Prostate gland (tissue), 2 donors: ENCODE measurements at regions of chr10 and their contacts with region 1.

Region 1: DNA sequence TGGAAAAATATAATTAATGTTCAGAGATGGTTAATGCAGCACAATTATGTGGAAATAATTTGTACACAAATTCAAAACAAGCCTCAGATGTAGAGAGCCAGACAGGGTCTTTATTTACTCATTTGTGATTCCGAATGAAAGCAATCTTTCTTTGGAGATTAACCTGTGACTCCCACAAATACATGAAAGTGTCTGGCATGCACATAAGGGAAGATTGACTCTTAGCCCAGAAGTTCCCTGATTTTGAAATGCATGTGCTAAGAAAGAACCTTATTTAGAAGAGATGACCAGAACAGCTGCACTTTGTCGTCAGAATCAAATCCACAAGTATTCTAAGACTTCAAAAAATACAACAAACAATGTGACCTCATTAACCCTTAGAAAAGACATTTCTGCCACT is 45.1 kb downstream of the RNLS start:
- DNase-seq: no peak
- H3K4me3 ChIP-seq: no peak overlapping the region
- H3K27ac ChIP-seq: no peak overlapping the region
- H3K4me1 ChIP-seq: no peaks in the 10 kb centered on the region
- H3K27me3 ChIP-seq: no peaks in the 10 kb centered on the region
- CTCF ChIP-seq: no peak
- POLR2A ChIP-seq: no peak

Region 2: DNA sequence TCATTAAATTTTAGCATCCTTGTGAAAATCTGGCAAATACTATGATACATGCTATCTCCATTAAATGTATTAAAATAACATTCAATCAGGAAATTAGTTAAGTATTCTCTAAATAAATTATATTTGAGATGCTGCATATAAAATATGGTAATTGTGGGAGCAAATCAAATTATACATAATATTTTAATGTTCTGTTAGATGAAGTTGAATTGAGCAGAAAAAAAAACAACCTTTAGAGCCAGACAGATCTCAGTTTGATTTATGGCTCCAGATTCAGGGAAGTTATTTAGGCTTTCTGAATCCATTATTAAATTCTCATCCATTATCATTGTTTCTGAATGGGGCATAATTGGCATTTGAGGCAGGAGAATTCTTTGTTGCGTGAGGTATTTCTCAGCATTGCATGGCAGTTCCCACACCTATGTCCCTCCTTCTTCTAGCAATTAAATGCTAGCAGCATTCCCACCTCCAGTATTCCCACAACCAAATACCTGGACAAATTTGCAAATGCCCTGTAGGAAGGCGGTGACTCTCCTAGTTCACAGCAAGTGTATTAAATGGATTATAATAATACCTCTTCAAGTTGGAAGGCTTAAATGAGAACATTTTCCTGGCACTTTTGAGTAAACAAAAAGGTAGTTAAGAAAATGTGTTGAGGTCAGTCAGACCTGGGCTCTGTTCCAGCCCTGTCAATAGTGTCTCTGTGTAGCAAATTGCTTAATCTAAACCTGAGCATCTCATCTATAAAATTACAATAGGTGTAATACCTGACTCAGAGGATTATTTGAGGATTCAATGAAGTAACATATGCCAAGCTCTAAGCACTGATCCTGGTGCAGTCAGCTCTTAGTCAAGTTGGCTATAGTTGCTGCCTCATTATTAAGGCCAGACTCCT is 63.8 kb before region 1 on chr10:
- intact Hi-C with region 1: loop called (anchors 10 kb)
- DNase-seq: peak; percentile 30
- H3K4me3 ChIP-seq: no peak overlapping the region
- H3K27ac ChIP-seq: no peak overlapping the region
- H3K4me1 ChIP-seq: no peaks in the 10 kb centered on the region
- H3K27me3 ChIP-seq: no peaks in the 10 kb centered on the region
- CTCF ChIP-seq: no peak
- POLR2A ChIP-seq: no peak